Naive thymus-derived CD4-positive, alpha-beta T cell (primary cell): ENCODE measurements at regions of chr10 and their contacts with region 1.

Region 1: GRCh38 chr10:69573056-69573806 is at the start of gene NEUROG3:
- DNase-seq: no peak
- ATAC-seq: peak; percentile 44
- H3K4me3 ChIP-seq: peak within 1 kb of the TSS; percentile 47
- H3K4me3 Mint-ChIP-seq: peak within 1 kb of the TSS; percentile 69 to 87 (median 82)
- H3K27ac ChIP-seq: no peak within 1 kb of the TSS
- H3K27ac Mint-ChIP-seq: no peak within 1 kb of the TSS
- H3K4me1 ChIP-seq: peaks cover 9 to 13% of the 10 kb centered on the region in 2 donors
- H3K4me1 Mint-ChIP-seq: peaks cover 15 to 41% (median 28%) of the 10 kb centered on the region in 7 donors
- H3K27me3 ChIP-seq: peaks cover 4 to 29% of the 10 kb centered on the region in 2 donors
- H3K27me3 Mint-ChIP-seq: peaks cover 74 to 92% (median 80%) of the 10 kb centered on the region in 5 donors
- total RNA-seq, gene NEUROG3: 0.24 TPM in 1 of 5 experiments, not detected in the others

Region 2: GRCh38 chr10:68871731-68872342 is 701.4 kb before region 1 on chr10:
- CTCF ChIA-PET with region 1: no interaction called
- POLR2A ChIA-PET with region 1: no interaction called
- intact Hi-C with region 1: no loop called
- DNase-seq: no peak
- ATAC-seq: no peak
- H3K4me3 ChIP-seq: no peak overlapping the region
- H3K4me3 Mint-ChIP-seq: no peak overlapping the region
- H3K27ac ChIP-seq: no peak overlapping the region
- H3K27ac Mint-ChIP-seq: peak overlapping the region in 2 of 9 donors; percentile 45 to 57
- H3K4me1 ChIP-seq: no peaks in the 10 kb centered on the region
- H3K4me1 Mint-ChIP-seq: peaks cover 0 to 13% (median 7%) of the 10 kb centered on the region in 7 donors
- H3K27me3 ChIP-seq: no peaks in the 10 kb centered on the region
- H3K27me3 Mint-ChIP-seq: no peaks in the 10 kb centered on the region

Region 3: DNA sequence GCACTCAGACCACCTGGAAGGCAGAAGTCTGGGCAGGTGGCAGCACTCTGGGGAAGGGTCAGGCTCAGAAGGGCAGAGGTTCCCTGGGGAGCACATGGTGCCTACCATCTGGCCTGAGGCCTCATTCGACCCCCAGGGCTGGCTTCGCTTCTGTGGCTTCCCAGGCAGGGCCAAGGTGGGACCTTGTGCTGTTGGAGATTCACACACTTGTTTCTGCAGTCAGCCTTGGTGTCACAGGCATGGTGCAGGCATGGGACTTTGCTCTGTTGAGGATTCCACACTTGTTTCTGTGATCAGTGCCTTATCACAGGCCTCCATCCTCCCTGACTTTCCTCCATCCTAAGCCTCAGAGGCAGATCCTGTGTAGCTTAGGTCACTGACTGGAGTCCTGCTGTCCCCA is 45.5 kb after region 1 on chr10:
- CTCF ChIA-PET with region 1: no interaction called
- POLR2A ChIA-PET with region 1: no interaction called
- intact Hi-C with region 1: no loop called
- DNase-seq: no peak
- ATAC-seq: no peak
- H3K4me3 ChIP-seq: no peak overlapping the region
- H3K4me3 Mint-ChIP-seq: no peak overlapping the region
- H3K27ac ChIP-seq: no peak overlapping the region
- H3K27ac Mint-ChIP-seq: no peak overlapping the region
- H3K4me1 ChIP-seq: peaks cover under 1 to 24% of the 10 kb centered on the region in 2 donors
- H3K4me1 Mint-ChIP-seq: peaks cover 9 to 43% (median 34%) of the 10 kb centered on the region in 7 donors
- H3K27me3 ChIP-seq: no peaks in the 10 kb centered on the region
- H3K27me3 Mint-ChIP-seq: peaks cover 0 to 19% (median 0%) of the 10 kb centered on the region in 5 donors

Region 4: GRCh38 chr10:69629897-69630650 is 56.8 kb after region 1 on chr10 and contains the start of gene FAM241B:
- CTCF ChIA-PET with region 1: no interaction called
- POLR2A ChIA-PET with region 1: no interaction called
- intact Hi-C with region 1: loop called in 1 of 2 experiments (anchors 5 kb)
- DNase-seq: peak; percentile 60 to 82 (median 75)
- ATAC-seq: peak; percentile 99
- H3K4me3 ChIP-seq: peak within 1 kb of the TSS; percentile 50
- H3K4me3 Mint-ChIP-seq: peak within 1 kb of the TSS; percentile 68 to 85 (median 79)
- H3K27ac ChIP-seq: peak within 1 kb of the TSS; percentile 67
- H3K27ac Mint-ChIP-seq: peak within 1 kb of the TSS; percentile 53 to 88 (median 79)
- H3K4me1 ChIP-seq: peaks cover 13 to 26% of the 10 kb centered on the region in 2 donors
- H3K4me1 Mint-ChIP-seq: peaks cover 3 to 55% (median 36%) of the 10 kb centered on the region in 7 donors
- H3K27me3 ChIP-seq: no peaks in the 10 kb centered on the region
- H3K27me3 Mint-ChIP-seq: no peaks in the 10 kb centered on the region
- total RNA-seq, gene FAM241B: 8.6 to 13.9 (median 12.4) TPM